CD8-positive, alpha-beta T cell (primary cell): ENCODE measurements at regions of chr1 and their contacts with region 1.

Region 1: GRCh38 chr1:244970661-244971551 is 106.6 kb upstream of the HNRNPU start:
- DNase-seq: peak; percentile 86 to 97 (median 93)
- ATAC-seq: peak; percentile 80
- H3K4me3 ChIP-seq: peak overlapping the region; percentile 68 to 70
- H3K4me3 Mint-ChIP-seq: peak overlapping the region; percentile 97
- H3K27ac ChIP-seq: peak overlapping the region; percentile 99 to 100
- H3K27ac Mint-ChIP-seq: peak overlapping the region; percentile 98
- H3K4me1 ChIP-seq: peaks cover 5% of the 10 kb centered on the region
- H3K4me1 Mint-ChIP-seq: peaks cover 19% of the 10 kb centered on the region
- H3K27me3 ChIP-seq: no peaks in the 10 kb centered on the region
- H3K27me3 Mint-ChIP-seq: no peaks in the 10 kb centered on the region
- CTCF ChIP-seq: peak; percentile 54

Region 2: GRCh38 chr1:244451951-244452795 is 518.7 kb before region 1 on chr1:
- CTCF ChIA-PET with region 1: no interaction called
- POLR2A ChIA-PET with region 1: interaction called, 4 read pairs
- intact Hi-C with region 1: loop called (anchors 1 to 2 kb)
- DNase-seq: peak; percentile 97 to 100 (median 99)
- ATAC-seq: peak; percentile 83
- H3K4me3 ChIP-seq: peak overlapping the region; percentile 78 to 95
- H3K4me3 Mint-ChIP-seq: peak overlapping the region; percentile 91
- H3K27ac ChIP-seq: peak overlapping the region; percentile 95 to 96
- H3K27ac Mint-ChIP-seq: peak overlapping the region; percentile 97
- H3K4me1 ChIP-seq: peaks cover 32% of the 10 kb centered on the region
- H3K4me1 Mint-ChIP-seq: peaks cover 45% of the 10 kb centered on the region
- H3K27me3 ChIP-seq: no peaks in the 10 kb centered on the region
- H3K27me3 Mint-ChIP-seq: no peaks in the 10 kb centered on the region
- CTCF ChIP-seq: peak; percentile 55

Region 3: GRCh38 chr1:244652699-244653466 is 318.0 kb before region 1 on chr1 and contains the start of gene DESI2:
- CTCF ChIA-PET with region 1: no interaction called
- POLR2A ChIA-PET with region 1: interaction called, 5 read pairs
- intact Hi-C with region 1: loop called (anchors 1 kb)
- DNase-seq: peak; percentile 95 to 100 (median 97)
- ATAC-seq: peak; percentile 92
- H3K4me3 ChIP-seq: peak within 1 kb of the TSS; percentile 67 to 95
- H3K4me3 Mint-ChIP-seq: no peak within 1 kb of the TSS
- H3K27ac ChIP-seq: peak within 1 kb of the TSS; percentile 68 to 73
- H3K27ac Mint-ChIP-seq: peak within 1 kb of the TSS; percentile 86
- H3K4me1 ChIP-seq: peaks cover 22% of the 10 kb centered on the region
- H3K4me1 Mint-ChIP-seq: peaks cover 26% of the 10 kb centered on the region
- H3K27me3 ChIP-seq: no peaks in the 10 kb centered on the region
- H3K27me3 Mint-ChIP-seq: no peaks in the 10 kb centered on the region
- CTCF ChIP-seq: peak; percentile 39
- total RNA-seq, gene DESI2: 14.5 to 16.2 TPM

Region 4: DNA sequence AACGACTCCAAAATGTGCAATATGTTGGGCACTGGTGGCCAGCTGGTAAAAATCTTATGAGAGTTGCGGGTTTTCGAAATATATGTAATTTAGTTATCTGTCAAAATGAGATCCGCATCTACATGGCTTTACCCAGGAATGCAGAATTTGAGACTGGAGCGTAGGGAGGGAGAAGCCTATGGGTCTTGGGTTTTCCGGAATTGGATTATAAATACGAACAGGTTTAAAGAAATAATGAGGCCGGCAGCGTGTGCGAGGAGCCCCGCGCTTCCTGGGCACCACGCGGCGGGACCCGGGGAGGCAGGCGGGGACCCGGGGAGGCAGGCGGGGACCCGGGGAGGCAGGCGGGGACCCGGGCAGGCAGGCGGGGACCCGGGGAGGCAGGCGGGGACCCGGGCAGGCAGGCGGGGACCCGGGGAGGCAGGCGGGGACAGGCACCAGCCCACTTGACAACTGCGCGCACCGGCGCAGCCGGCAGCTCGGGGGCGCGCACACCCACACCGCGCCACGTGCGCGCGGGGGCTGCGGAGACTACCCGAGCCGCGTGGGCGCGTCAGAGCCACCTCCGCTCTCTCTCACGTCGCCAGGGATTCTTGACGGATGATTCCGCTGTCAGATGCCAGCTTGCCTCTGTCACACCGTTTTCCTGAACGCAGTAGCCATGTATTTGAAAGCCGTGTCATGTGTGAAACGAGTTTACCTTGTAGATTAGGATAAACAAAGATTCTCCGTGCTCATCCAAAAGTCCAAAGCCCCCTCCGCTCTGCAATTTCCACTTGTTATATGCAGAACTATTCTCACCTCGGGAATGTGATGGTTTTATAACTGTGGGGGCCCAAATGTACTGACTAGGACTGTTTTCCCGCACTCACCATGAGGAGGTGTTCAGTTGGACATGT is 52.2 kb before region 1 on chr1:
- CTCF ChIA-PET with region 1: interaction called, 3 read pairs
- POLR2A ChIA-PET with region 1: interaction called, 8 read pairs
- intact Hi-C with region 1: loop called (anchors 1 to 2 kb)
- DNase-seq: peak; percentile 36 to 91 (median 68)
- ATAC-seq: peak; percentile 96
- H3K4me3 ChIP-seq: peak overlapping the region; percentile 55
- H3K4me3 Mint-ChIP-seq: peak overlapping the region; percentile 86
- H3K27ac ChIP-seq: peak overlapping the region in 1 of 2 experiments; percentile 33
- H3K27ac Mint-ChIP-seq: peak overlapping the region; percentile 64
- H3K4me1 ChIP-seq: peaks cover 6% of the 10 kb centered on the region
- H3K4me1 Mint-ChIP-seq: peaks cover 11% of the 10 kb centered on the region
- H3K27me3 ChIP-seq: no peaks in the 10 kb centered on the region
- H3K27me3 Mint-ChIP-seq: no peaks in the 10 kb centered on the region
- CTCF ChIP-seq: no peak

Region 5: GRCh38 chr1:245031041-245031440 is 60.1 kb after region 1 on chr1:
- CTCF ChIA-PET with region 1: no interaction called
- POLR2A ChIA-PET with region 1: no interaction called
- intact Hi-C with region 1: loop called in 1 of 2 experiments (anchors 2 kb)
- DNase-seq: no peak
- ATAC-seq: no peak
- H3K4me3 ChIP-seq: no peak overlapping the region
- H3K4me3 Mint-ChIP-seq: no peak overlapping the region
- H3K27ac ChIP-seq: no peak overlapping the region
- H3K27ac Mint-ChIP-seq: no peak overlapping the region
- H3K4me1 ChIP-seq: peaks cover 5% of the 10 kb centered on the region
- H3K4me1 Mint-ChIP-seq: peaks cover 5% of the 10 kb centered on the region
- H3K27me3 ChIP-seq: no peaks in the 10 kb centered on the region
- H3K27me3 Mint-ChIP-seq: no peaks in the 10 kb centered on the region
- CTCF ChIP-seq: no peak